ENCODE measurements at regions of chr3 and their contacts with region 1.

Region 1: GRCh38 chr3:97793420-97794019 is 28.3 kb upstream of the CRYBG3 start:
- DNase-seq: no peak
- H3K4me3 Mint-ChIP-seq: no peak overlapping the region
- H3K27ac Mint-ChIP-seq: no peak overlapping the region
- H3K4me1 Mint-ChIP-seq: no peaks in the 10 kb centered on the region
- H3K27me3 Mint-ChIP-seq: no peaks in the 10 kb centered on the region

Region 2: GRCh38 chr3:97821810-97822775 is 28.6 kb after region 1 on chr3 and contains the start of gene CRYBG3:
- CTCF ChIA-PET with region 1: interaction called, 6 read pairs
- intact Hi-C with region 1: loop called (anchors 2 kb)
- DNase-seq: peak; percentile 82
- H3K4me3 Mint-ChIP-seq: peak within 1 kb of the TSS; percentile 95
- H3K27ac Mint-ChIP-seq: peak within 1 kb of the TSS; percentile 27
- H3K4me1 Mint-ChIP-seq: peaks cover 14% of the 10 kb centered on the region
- H3K27me3 Mint-ChIP-seq: peaks cover 16% of the 10 kb centered on the region
- total RNA-seq, gene CRYBG3: 1.3 to 1.7 TPM

Region 3: GRCh38 chr3:97895216-97895615 is 101.7 kb after region 1 on chr3:
- CTCF ChIA-PET with region 1: interaction called, 4 read pairs
- intact Hi-C with region 1: loop called (anchors 5 kb)
- DNase-seq: no peak
- H3K4me3 Mint-ChIP-seq: no peak overlapping the region
- H3K27ac Mint-ChIP-seq: no peak overlapping the region
- H3K4me1 Mint-ChIP-seq: no peaks in the 10 kb centered on the region
- H3K27me3 Mint-ChIP-seq: no peaks in the 10 kb centered on the region

Region 4: DNA sequence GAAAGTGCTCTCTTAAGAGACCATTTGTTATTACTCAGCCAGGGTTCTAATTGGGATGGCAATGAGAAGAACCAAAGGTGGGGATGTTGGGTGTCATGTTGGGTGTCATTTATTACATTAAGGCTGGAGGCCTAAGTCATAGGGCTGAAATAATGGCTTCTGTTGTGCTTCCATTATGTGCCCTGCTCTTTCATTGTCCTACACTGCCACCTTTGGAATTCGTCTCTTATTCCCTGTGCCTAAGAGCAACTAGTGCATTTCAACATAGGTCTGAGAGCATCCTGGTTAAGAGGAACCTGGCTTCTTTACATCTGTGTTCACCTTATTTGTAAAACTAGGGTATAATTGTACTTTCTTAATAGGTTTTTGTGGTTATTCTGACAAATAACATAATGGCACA is 146.5 kb after region 1 on chr3:
- CTCF ChIA-PET with region 1: interaction called, 3 read pairs
- intact Hi-C with region 1: loop called (anchors 1 kb)
- DNase-seq: no peak
- H3K4me3 Mint-ChIP-seq: no peak overlapping the region
- H3K27ac Mint-ChIP-seq: no peak overlapping the region
- H3K4me1 Mint-ChIP-seq: peaks cover 17% of the 10 kb centered on the region
- H3K27me3 Mint-ChIP-seq: no peaks in the 10 kb centered on the region

Region 5: DNA sequence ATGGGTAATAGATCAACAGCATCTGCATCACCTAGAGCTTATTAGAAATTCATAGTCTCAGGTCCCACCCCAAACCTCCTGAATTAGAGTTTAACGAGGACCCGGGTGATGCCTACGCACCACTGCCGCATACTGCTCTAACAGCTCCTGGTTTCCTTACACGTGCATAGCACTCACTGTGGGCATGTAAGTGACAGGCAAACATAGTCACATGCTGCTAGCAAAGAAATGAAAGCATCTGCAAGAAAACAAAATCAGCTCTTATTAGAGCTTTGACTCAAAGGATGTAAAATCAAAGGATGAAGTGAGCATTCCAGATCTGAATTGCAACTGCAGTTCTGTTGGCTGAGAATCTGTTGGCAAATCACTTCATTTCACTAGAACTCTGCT is 197.8 kb after region 1 on chr3:
- CTCF ChIA-PET with region 1: no interaction called
- intact Hi-C with region 1: no loop called
- DNase-seq: peak; percentile 44
- H3K4me3 Mint-ChIP-seq: peak overlapping the region; percentile 18
- H3K27ac Mint-ChIP-seq: peak overlapping the region; percentile 26
- H3K4me1 Mint-ChIP-seq: peaks cover 18% of the 10 kb centered on the region
- H3K27me3 Mint-ChIP-seq: no peaks in the 10 kb centered on the region

Region 6: DNA sequence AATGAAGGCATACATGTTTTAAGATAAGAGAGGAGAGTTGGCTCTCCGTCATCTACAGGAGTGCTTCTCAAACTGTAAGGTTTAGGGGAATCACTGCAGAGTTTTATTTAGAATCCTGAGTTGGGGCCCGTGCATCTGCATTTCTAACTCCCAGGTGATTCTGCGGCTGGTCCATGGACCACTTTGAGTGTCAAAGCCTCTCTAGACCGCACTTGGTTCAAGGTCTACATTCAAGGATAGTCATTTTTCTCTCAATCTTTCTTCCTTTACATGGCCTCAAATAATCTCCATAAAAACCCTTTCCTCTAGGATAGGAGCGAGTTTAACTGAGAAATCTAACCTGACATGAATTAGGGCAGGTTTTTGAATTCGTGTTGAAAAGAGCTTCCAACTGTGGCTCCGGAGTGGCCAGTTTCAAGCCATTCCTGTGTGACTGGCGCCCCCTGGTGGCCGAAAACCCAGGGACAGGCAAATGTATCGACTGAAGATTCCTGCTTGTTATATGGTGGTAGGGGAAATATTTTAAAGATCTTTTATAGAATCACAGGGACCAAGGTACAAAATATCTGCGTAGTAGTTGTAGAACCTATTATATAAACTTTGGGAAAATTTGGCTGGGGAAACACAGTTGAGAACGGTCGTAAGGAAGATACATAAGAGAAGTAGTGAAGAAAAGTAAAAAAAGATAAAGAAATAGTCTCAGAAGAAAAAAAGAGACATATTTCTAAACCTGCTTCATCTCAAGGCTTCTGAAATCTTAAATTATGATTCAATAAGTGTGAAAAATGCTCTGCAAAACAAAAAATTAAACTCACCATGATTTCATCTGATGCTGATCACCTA is 229.7 kb after region 1 on chr3:
- CTCF ChIA-PET with region 1: interaction called, 77 read pairs
- intact Hi-C with region 1: loop called (anchors 1 kb)
- DNase-seq: peak; percentile 96
- H3K4me3 Mint-ChIP-seq: no peak overlapping the region
- H3K27ac Mint-ChIP-seq: no peak overlapping the region
- H3K4me1 Mint-ChIP-seq: peaks cover 5% of the 10 kb centered on the region
- H3K27me3 Mint-ChIP-seq: no peaks in the 10 kb centered on the region

Region 7: DNA sequence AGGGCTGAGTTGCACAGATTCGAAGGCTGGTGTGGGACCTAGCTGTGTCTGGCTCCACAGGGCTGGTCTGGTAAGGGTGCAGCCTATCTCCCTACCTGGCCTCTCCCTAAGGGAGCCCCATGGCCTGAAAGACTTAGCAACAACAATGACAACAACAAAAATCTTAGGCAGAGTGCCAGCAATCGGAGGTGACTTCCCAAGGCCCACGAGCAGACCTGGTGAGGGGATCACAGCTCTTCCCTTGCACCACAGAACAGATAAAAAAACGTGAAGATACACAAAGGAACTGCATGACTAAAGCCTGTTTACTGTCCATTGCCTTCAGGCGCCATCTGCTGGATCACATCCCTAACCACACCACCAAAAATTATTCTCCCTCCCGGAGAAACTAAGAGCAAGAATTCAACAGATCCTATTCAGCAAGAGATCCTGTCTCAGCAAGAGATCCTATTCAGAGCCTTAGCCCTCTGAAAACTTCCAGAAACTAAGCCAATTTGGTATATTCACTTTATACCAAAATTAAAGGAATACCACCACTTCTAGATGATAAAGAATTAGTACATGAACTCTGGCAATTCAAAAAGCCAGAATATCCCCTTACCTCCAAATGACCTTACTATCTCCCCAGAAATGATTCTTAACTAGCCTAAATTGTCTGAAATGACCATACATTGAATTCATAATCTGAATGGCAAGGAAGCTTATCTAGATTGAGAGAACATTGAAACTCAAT is 536.0 kb after region 1 on chr3:
- CTCF ChIA-PET with region 1: no interaction called
- intact Hi-C with region 1: loop called (anchors 5 kb)
- DNase-seq: peak; percentile 57
- H3K4me3 Mint-ChIP-seq: no peak overlapping the region
- H3K27ac Mint-ChIP-seq: no peak overlapping the region
- H3K4me1 Mint-ChIP-seq: no peaks in the 10 kb centered on the region
- H3K27me3 Mint-ChIP-seq: peaks cover 16% of the 10 kb centered on the region

Measured in activated naive CD4-positive, alpha-beta T cell treated with anti-CD3 and anti-CD28 coated beads for 36 hours (primary cell).